Left ventricle myocardium superior (tissue), 1 donor: ENCODE measurements at regions of chr7 and their contacts with region 1.

Region 1: GRCh38 chr7:25894902-25895791 is 256.9 kb upstream of the NFE2L3 start:
- DNase-seq: peak; percentile 78
- ATAC-seq: peak; percentile 89

Region 2: GRCh38 chr7:25926891-25927625 is 31.9 kb after region 1 on chr7:
- intact Hi-C with region 1: no loop called
- DNase-seq: no peak
- ATAC-seq: no peak

Region 3: DNA sequence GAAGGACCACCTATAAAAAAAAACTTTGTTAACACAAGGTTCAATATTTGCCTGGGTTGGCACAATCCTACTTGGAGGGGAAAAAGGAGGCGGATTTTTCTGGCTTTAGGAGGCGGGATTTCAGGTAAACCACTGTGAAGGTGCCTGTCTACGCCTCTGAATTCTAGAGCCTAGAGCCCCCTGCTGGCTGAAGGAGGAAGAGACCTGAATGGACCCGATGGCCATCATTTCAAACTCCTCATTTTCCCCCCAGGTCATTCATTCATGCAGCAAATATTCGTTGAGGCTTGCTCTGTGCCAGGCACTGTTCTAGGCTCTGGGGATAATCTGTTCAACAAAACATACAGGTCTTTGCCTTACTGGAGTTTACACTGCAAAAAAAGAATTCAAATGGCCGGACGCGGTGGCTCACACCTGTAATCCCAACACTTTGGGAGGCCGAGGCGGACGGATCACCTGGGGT is 166.6 kb after region 1 on chr7:
- intact Hi-C with region 1: loop called (anchors 5 kb)
- DNase-seq: peak; percentile 60
- ATAC-seq: peak; percentile 51

Region 4: DNA sequence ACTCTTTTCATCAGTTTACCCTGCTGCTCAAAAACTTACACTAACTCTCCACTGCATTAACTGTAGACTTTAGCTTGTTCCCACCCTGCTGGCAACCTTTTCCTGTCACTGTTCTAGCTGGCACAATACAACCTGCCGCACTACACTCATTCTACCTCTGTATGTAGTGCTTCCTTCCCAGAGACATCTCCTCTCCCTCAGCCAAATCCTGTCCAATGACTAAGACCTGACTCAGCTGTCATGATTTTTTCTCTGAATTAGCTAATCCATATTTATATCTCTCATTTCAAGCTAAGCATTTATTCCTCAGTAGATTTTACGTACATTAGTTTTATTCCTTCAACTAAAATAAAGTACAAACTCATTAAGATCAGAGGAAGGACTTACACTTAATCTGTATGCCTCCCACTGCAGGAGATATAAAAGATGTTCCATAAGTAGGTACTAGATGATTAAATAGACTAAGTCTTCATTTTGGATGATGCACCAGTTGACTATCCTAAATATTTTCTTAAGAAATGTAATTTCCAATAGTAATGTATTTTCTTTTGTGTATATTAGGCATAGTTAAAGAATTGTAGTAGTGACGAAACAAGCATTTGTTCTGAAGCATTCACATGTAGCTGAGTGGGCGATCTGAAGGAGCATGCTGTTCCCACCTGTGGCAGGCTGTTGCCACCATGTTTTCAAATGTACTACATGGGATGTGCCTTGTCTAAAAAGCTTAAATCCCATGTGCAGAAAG is 780.2 kb after region 1 on chr7:
- intact Hi-C with region 1: loop called (anchors 10 kb)
- DNase-seq: no peak
- ATAC-seq: no peak